Ovary (tissue), 10 donors: ENCODE measurements at regions of chr5 and their contacts with region 1.

Region 1: DNA sequence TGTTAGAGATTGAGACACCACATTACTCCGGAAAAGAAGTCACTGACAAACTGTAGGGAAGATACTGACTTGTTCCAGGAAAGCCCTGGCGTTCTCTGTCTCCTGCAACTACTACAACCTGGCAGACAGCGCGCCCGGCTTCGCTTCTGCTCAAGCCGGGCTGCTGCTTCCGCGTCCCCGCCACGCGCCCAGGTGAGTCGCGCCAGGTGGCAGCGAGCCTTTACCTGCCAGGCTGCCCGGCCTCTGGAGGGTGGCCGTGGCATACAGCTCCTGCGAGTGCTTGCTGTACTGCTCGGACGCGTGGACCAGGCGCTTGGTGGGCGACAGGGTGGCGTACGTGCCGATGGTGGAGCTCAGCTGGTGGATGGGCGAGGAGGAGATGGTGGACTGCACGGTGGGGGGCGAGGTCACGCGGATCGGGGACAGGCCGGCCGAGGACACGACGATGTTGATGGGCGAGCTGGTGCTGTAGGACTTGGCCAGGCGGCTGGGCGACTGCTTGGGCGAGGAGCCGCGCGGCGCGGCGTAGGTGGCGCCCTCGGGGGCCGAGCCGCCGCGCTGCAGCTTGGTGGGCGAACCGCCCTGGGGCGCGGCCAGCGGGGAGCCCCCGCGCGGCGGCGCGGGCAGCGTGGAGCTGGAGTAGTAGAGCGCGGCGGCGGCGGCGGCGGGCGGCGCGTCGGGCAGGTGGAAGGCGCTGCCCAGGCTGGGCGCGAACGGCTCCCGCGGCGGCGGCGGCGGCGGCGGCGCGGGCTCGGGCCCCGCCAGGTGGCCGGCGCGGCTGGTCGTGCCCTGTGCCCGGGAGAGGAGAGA is 519.6 kb downstream of the CTNND2 start:
- DNase-seq: peak; percentile 20 to 58 (median 49)
- H3K4me3 ChIP-seq: peak overlapping the region; percentile 11
- H3K27ac ChIP-seq: peak overlapping the region in 1 of 2 donors; percentile 23
- H3K4me1 ChIP-seq: peaks cover 5% of the 10 kb centered on the region
- H3K27me3 ChIP-seq: no peaks in the 10 kb centered on the region
- CTCF ChIP-seq: no peak
- EP300 ChIP-seq: no peak
- POLR2A ChIP-seq: no peak

Region 2: DNA sequence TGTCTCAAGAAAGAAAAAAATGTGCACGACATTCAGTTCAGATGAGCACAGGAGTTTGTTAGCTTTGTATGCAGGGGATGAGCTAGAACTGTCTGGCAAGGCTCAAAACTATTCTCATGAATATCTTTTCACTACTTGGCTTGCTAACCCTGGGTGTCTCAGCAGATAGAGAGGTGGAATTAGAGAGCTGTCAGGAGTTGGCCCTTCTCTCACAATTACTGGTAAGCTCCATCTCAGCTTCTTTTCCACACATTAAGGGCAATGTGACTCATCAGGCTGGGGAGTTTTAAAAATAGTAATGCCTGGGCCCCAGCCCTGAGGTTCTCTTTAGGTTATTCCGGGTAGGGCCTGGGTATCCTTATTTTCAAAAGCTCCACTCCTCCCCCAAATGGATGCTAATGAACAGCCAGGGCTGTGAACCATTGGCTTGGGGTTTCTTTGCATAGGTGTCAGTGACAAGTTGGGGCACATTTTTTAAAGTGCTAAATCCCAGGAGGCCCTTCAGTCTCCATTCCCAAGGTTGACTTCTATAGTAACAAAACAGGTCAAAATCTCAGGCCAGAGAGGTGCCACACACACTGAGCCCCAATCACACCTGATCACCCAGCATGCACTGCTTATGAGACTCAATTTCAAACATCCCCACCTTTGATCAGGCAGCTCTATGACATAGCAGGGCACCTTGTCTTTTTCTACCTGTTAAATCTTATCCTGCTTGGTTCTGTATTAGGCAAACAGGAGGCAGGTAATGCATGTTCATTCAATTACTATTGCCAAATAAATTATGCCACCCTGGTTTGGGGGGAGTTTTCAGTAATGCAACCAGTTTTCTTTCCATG is 383.9 kb before region 1 on chr5:
- intact Hi-C with region 1: no loop called
- DNase-seq: no peak
- H3K4me3 ChIP-seq: no peak overlapping the region
- H3K27ac ChIP-seq: no peak overlapping the region
- H3K4me1 ChIP-seq: no peaks in the 10 kb centered on the region
- H3K27me3 ChIP-seq: no peaks in the 10 kb centered on the region
- CTCF ChIP-seq: no peak
- EP300 ChIP-seq: no peak
- POLR2A ChIP-seq: no peak

Region 3: DNA sequence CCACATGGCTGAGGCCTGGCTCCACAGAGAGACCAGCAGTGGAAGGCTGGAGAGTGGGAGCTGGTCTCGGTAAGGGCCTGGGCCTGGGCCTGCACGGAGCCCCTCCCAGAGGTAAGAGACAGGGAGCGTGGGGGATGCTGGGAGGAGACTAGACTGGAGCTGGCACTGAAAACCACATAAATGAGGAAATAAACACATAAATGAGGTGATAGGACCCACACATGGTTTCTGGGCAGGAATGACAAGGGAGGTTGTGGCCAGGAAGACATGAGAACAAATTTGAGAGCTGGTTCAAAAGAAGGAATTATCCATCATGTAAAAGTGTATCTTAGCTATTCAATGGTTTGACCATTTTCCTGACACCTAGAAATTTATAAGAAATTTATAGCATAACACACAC is 171.9 kb before region 1 on chr5:
- intact Hi-C with region 1: no loop called
- DNase-seq: no peak
- H3K4me3 ChIP-seq: no peak overlapping the region
- H3K27ac ChIP-seq: no peak overlapping the region
- H3K4me1 ChIP-seq: no peaks in the 10 kb centered on the region
- H3K27me3 ChIP-seq: no peaks in the 10 kb centered on the region
- CTCF ChIP-seq: no peak
- EP300 ChIP-seq: no peak
- POLR2A ChIP-seq: no peak

Region 4: DNA sequence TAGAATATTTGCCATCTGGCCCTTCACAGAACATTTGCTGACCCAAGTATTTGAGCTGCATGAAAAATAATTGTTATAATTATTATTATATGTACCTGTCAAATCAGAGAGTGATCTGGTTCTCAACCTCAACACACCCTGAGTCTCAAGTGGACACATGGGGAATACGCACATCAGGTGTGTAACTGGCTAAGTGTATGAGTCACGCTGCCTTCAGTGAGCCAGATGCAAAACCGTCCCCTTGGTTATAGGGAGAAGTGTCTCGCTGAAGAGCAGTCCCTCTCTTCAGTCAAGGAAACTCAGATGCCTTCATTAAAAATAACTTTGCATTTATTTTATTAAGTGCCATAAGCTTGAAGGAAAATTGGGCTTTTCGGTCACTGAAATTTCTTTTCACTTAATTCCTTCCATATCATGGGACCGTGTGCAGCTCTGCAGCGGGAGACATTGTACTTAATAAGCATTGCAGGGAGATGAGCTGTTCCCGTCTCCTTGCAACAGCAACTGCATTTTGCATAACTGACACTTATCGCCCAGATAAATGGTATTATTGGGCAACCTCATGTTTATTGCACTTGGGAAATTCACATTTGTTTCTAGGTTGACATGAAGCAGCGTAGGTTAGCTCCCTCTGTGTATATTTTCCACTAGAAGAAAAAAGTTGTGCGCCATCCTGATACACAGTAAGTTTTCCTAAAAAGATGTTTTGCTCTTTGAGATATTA is 111.3 kb before region 1 on chr5:
- intact Hi-C with region 1: loop called in 1 of 4 experiments (anchors 10 kb)
- DNase-seq: no peak
- H3K4me3 ChIP-seq: no peak overlapping the region
- H3K27ac ChIP-seq: no peak overlapping the region
- H3K4me1 ChIP-seq: no peaks in the 10 kb centered on the region
- H3K27me3 ChIP-seq: no peaks in the 10 kb centered on the region
- CTCF ChIP-seq: no peak
- EP300 ChIP-seq: no peak
- POLR2A ChIP-seq: no peak

Region 5: DNA sequence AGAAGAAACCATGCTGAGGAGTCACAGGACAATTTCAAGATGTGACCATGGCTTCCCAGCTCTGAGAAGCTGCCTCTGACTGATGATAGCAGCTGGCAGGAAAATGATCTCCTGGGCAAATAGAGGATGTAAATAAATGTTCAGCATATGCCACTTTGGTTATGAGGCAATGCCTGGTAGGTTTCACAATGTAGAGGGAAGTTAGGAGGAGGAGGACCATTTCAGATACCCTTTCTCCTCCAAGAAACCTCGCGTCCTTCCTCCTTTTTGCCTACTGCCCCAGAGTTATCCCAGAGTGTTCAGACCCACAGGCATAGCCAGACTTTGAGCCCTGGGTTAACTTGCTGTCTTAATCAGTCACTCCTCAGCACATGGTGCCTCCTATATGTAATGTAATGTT is 82.0 kb before region 1 on chr5:
- intact Hi-C with region 1: loop called in 1 of 4 experiments (anchors 10 kb)
- DNase-seq: no peak
- H3K4me3 ChIP-seq: no peak overlapping the region
- H3K27ac ChIP-seq: no peak overlapping the region
- H3K4me1 ChIP-seq: peaks cover 5% of the 10 kb centered on the region
- H3K27me3 ChIP-seq: no peaks in the 10 kb centered on the region
- CTCF ChIP-seq: no peak
- EP300 ChIP-seq: no peak
- POLR2A ChIP-seq: no peak